ENCODE measurements at regions of chr17 and their contacts with region 1.

Region 1: GRCh38 chr17:55527540-55528118 is 16.4 kb upstream of the SMIM36 start:
- DNase-seq: no peak
- H3K4me3 ChIP-seq: no peak overlapping the region
- H3K27ac ChIP-seq: no peak overlapping the region
- H3K4me1 ChIP-seq: peaks cover 0 to 3% (median 0%) of the 10 kb centered on the region in 4 donors
- H3K27me3 ChIP-seq: no peaks in the 10 kb centered on the region
- CTCF ChIP-seq: peak in 4 of 5 experiments; percentile 29 to 40 (median 30)
- EP300 ChIP-seq: no peak
- POLR2A ChIP-seq: no peak

Region 2: DNA sequence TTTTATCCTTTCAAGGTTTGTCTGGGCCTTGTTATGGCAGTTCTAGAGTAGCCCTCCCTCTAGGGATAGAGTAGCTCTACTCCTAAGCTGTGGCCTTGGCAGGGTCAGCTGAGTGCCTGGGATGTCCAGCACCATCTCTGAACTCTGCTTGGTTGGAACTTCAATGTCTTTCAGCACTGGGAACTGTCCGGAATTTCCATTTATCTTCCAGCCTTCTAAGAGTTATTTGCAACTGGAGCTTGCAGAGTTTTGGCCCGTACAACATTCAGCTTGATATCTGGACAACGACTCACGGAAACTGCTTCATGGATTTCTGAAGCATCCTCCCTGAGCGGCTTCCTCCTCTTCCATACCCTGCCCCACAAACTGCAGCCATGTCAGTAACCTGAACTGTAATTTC is 128.9 kb before region 1 on chr17:
- in situ Hi-C with region 1: no loop called
- intact Hi-C with region 1: no loop called
- DNase-seq: no peak
- H3K4me3 ChIP-seq: no peak overlapping the region
- H3K27ac ChIP-seq: no peak overlapping the region
- H3K4me1 ChIP-seq: peaks cover 0 to 29% (median 24%) of the 10 kb centered on the region in 4 donors
- H3K27me3 ChIP-seq: no peaks in the 10 kb centered on the region
- CTCF ChIP-seq: no peak
- EP300 ChIP-seq: no peak
- POLR2A ChIP-seq: no peak

Region 3: GRCh38 chr17:55410722-55411462 is 116.7 kb before region 1 on chr17:
- in situ Hi-C with region 1: no loop called
- intact Hi-C with region 1: no loop called
- DNase-seq: no peak
- H3K4me3 ChIP-seq: no peak overlapping the region
- H3K27ac ChIP-seq: no peak overlapping the region
- H3K4me1 ChIP-seq: peaks cover 0 to 8% (median 3%) of the 10 kb centered on the region in 4 donors
- H3K27me3 ChIP-seq: no peaks in the 10 kb centered on the region
- CTCF ChIP-seq: no peak
- EP300 ChIP-seq: no peak
- POLR2A ChIP-seq: no peak

Region 4: DNA sequence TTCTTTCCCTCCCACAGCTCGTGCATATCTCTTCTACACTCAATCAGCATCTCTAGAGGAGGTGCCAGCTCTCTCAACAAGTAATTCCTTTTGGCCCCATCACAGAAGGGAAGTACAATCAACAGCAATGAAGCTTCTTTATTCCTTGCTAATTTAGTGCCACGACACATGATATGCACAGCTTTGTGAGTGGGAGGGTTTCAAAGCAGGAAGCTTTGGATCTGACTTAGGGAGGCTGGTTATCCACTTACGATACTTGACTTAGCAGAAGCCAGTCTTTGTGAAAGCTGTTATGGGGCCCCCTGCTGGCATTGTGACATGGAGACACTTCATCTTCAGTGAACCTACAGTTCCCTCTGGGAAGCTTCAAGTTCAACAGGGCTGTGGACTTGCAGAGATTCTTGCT is 114.0 kb after region 1 on chr17:
- in situ Hi-C with region 1: loop called in 1 of 4 experiments (anchors 25 kb)
- intact Hi-C with region 1: no loop called
- DNase-seq: peak; percentile 57
- H3K4me3 ChIP-seq: no peak overlapping the region
- H3K27ac ChIP-seq: no peak overlapping the region
- H3K4me1 ChIP-seq: no peaks in the 10 kb centered on the region
- H3K27me3 ChIP-seq: no peaks in the 10 kb centered on the region
- CTCF ChIP-seq: peak; percentile 13 to 59 (median 43)
- EP300 ChIP-seq: no peak
- POLR2A ChIP-seq: no peak

Region 5: DNA sequence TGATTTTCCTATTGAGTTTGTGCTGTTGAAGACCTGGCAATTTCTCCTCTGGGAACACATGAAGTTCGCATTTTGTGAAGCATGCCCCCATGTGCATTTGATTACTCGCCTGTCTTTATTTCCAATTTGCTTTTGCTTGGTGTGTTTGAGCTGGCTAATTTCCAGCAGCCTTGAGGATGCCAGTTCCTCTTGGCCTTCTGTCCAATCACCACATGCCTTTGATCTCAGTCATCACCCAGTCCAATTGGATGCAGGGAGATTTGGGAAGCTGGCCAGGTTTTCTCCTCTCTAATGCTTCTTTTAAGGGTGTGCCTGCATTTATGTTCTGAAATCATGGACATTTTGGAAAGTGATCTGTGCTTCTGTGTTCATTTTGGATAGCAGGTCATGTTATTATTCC is 198.8 kb after region 1 on chr17:
- in situ Hi-C with region 1: loop called in 1 of 4 experiments (anchors 10 kb)
- intact Hi-C with region 1: no loop called
- DNase-seq: peak; percentile 17
- H3K4me3 ChIP-seq: no peak overlapping the region
- H3K27ac ChIP-seq: peak overlapping the region in 3 of 4 donors; percentile 28 to 45 (median 35)
- H3K4me1 ChIP-seq: peaks cover 0 to 14% (median 10%) of the 10 kb centered on the region in 4 donors
- H3K27me3 ChIP-seq: peaks cover 6% of the 10 kb centered on the region
- CTCF ChIP-seq: no peak
- EP300 ChIP-seq: no peak
- POLR2A ChIP-seq: no peak

Region 6: GRCh38 chr17:55770148-55770870 is 242.7 kb after region 1 on chr17:
- in situ Hi-C with region 1: loop called in 3 of 4 experiments (anchors 5 to 25 kb)
- intact Hi-C with region 1: loop called (anchors 2 kb)
- DNase-seq: no peak
- H3K4me3 ChIP-seq: no peak overlapping the region
- H3K27ac ChIP-seq: peak overlapping the region in 2 of 4 donors; percentile 9 to 47
- H3K4me1 ChIP-seq: peaks cover 0 to 8% (median 4%) of the 10 kb centered on the region in 4 donors
- H3K27me3 ChIP-seq: no peaks in the 10 kb centered on the region
- CTCF ChIP-seq: peak; percentile 46 to 70 (median 59)
- EP300 ChIP-seq: no peak
- POLR2A ChIP-seq: no peak

Region 7: DNA sequence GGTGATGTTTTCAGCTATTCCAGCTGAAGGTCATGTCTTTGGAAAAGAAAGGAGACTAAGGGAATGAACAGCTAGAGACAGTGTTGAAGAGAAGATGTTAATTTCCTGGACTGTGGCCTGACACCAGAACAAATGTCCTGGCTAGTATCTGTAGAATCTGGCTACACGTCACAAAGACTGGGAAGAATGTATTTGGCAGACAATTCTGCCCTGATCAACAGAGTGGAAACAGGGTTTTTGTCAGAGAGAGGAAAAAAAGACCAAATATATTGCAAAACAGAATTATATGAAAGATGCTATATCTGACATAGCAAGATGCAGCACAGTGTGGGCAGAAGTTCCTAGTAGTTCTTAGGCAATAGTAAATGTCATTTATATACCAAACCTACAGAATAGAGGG is 608.7 kb after region 1 on chr17:
- in situ Hi-C with region 1: no loop called
- intact Hi-C with region 1: no loop called
- DNase-seq: no peak
- H3K4me3 ChIP-seq: no peak overlapping the region
- H3K27ac ChIP-seq: no peak overlapping the region
- H3K4me1 ChIP-seq: peaks cover 0 to 5% (median 0%) of the 10 kb centered on the region in 4 donors
- H3K27me3 ChIP-seq: no peaks in the 10 kb centered on the region
- CTCF ChIP-seq: no peak
- EP300 ChIP-seq: no peak
- POLR2A ChIP-seq: no peak

Region 8: GRCh38 chr17:56319517-56319916 is 791.9 kb after region 1 on chr17:
- in situ Hi-C with region 1: loop called in 1 of 4 experiments (anchors 25 kb)
- intact Hi-C with region 1: no loop called
- DNase-seq: no peak
- H3K4me3 ChIP-seq: no peak overlapping the region
- H3K27ac ChIP-seq: no peak overlapping the region
- H3K4me1 ChIP-seq: no peaks in the 10 kb centered on the region
- H3K27me3 ChIP-seq: no peaks in the 10 kb centered on the region
- CTCF ChIP-seq: peak in 4 of 5 experiments; percentile 37 to 50 (median 44)
- EP300 ChIP-seq: no peak
- POLR2A ChIP-seq: no peak